Activated CD8-positive, alpha-beta T cell treated with anti-CD3 and anti-CD28 coated beads, Interleukin-2, amount 10 ng/mL, durations not matched to agents 7 days and 5 days (primary cell): ENCODE measurements at regions of chr6 and their contacts with region 1.

Region 1: GRCh38 chr6:8006208-8006607 is 58.0 kb downstream of the BLOC1S5 start:
- DNase-seq: peak; percentile 27
- ATAC-seq: no peak
- H3K4me3 Mint-ChIP-seq: no peak overlapping the region
- H3K27ac Mint-ChIP-seq: no peak overlapping the region
- H3K4me1 Mint-ChIP-seq: no peaks in the 10 kb centered on the region
- H3K27me3 Mint-ChIP-seq: peaks cover 2% of the 10 kb centered on the region

Region 2: GRCh38 chr6:7725849-7726415 is 280.3 kb before region 1 on chr6 and contains the start of gene BMP6:
- CTCF ChIA-PET with region 1: interaction called, 22 read pairs
- POLR2A ChIA-PET with region 1: no interaction called
- DNase-seq: peak; percentile 76
- ATAC-seq: peak; percentile 85
- H3K4me3 Mint-ChIP-seq: peak within 1 kb of the TSS; percentile 69
- H3K27ac Mint-ChIP-seq: no peak within 1 kb of the TSS
- H3K4me1 Mint-ChIP-seq: peaks cover 17% of the 10 kb centered on the region
- H3K27me3 Mint-ChIP-seq: peaks cover 68% of the 10 kb centered on the region
- total RNA-seq, gene BMP6: not detected